Lower leg skin (tissue), 4 donors: ENCODE measurements at regions of chr4 and their contacts with region 1.

Region 1: DNA sequence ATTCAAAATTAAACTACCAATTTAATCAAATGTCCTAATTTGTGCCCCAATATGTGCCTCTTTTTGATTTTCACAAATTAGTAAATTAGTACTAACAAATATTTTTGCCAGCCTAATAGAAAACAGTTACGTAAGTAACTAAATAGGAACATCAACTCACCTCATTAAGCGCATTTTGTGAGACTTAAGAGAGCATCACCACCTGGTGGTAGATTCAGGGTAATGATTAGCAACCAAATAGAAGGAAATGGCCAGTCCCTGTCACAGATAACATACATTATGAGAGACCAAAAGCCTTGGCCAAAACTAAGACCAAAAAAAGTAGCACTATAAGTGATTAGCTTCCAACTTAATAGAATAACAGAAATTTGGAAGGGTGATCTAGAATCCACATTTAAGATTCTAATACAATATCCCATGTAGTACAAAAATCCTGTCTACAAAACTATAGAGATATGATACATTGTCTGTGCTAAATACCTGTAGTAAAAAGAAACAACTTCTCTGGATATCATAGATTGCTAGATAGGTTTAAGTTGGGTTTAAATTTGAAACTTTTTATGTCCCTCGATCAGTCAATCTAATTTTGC is 46.7 kb downstream of the C4orf46 start:
- DNase-seq: peak in 1 of 2 donors; percentile 17
- H3K4me3 ChIP-seq: no peak overlapping the region
- CTCF ChIP-seq: peak in 1 of 3 donors; percentile 24
- POLR2A ChIP-seq: no peak

Region 2: GRCh38 chr4:157983300-157983699 is 641.7 kb before region 1 on chr4:
- intact Hi-C with region 1: loop called (anchors 10 kb)
- DNase-seq: no peak
- H3K4me3 ChIP-seq: no peak overlapping the region
- CTCF ChIP-seq: no peak
- POLR2A ChIP-seq: no peak

Region 3: DNA sequence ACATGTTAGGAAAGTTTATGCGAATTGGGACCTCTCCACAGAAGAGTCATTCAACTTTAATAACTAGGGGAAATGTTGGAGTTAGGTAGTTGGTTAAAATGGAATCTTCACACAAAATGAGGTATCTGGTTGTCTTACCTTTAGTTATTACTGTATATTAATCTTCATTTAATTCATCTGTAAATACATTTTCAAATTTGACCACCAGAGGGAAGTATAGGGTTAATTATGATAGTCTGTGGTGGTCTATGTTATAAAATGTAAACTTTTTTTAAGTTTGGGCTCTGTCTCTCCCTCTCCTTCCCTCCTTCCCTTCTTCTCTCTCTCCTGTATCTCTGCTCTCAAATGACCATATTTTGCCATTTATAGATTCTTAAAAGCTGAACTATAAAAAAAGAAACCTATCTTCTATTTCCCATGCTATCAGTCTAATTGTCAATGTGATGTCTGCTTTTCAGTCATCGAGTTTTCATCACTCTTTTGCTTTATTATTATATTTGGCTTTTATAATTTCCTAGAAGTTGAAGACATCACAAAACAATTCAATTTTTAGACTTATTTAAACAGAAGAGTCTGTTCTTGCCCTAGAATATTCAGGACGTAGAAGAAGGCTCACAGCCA is 364.9 kb before region 1 on chr4:
- intact Hi-C with region 1: loop called (anchors 5 kb)
- DNase-seq: no peak
- H3K4me3 ChIP-seq: no peak overlapping the region
- CTCF ChIP-seq: no peak
- POLR2A ChIP-seq: no peak